ENCODE measurements at regions of chr1 and their contacts with region 1.

Region 1: GRCh38 chr1:72845342-72845741 is 563.0 kb upstream of the NEGR1 start:
- DNase-seq: no peak
- H3K4me3 ChIP-seq: no peak overlapping the region
- H3K27ac ChIP-seq: no peak overlapping the region
- H3K4me1 ChIP-seq: no peaks in the 10 kb centered on the region
- H3K27me3 ChIP-seq: no peaks in the 10 kb centered on the region
- CTCF ChIP-seq: no peak
- POLR2A ChIP-seq: no peak

Region 2: DNA sequence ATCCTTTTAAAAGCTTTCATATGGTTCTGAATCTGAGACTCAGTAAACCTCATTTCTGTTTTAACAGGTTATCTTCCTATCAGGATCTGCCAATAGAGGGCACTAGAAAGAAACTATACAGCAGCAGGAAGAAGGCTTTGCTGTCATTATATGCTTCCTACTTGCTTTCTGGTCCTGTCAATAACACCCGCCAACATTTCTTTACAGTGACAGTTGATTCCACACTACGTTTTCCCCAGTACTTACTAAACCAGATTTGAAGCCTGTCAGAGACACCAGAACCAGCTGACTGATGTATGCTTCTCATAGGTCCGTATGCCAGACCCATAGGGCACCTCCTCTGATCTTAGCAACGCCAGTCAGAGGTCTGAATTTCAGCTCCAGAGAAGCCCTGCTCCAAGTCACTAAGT is 222.0 kb before region 1 on chr1:
- intact Hi-C with region 1: loop called (anchors 10 kb)
- DNase-seq: peak; percentile 4
- H3K4me3 ChIP-seq: no peak overlapping the region
- H3K27ac ChIP-seq: no peak overlapping the region
- H3K4me1 ChIP-seq: no peaks in the 10 kb centered on the region
- H3K27me3 ChIP-seq: no peaks in the 10 kb centered on the region
- CTCF ChIP-seq: peak in 3 of 4 experiments; percentile 20 to 47 (median 46)
- POLR2A ChIP-seq: no peak

Region 3: DNA sequence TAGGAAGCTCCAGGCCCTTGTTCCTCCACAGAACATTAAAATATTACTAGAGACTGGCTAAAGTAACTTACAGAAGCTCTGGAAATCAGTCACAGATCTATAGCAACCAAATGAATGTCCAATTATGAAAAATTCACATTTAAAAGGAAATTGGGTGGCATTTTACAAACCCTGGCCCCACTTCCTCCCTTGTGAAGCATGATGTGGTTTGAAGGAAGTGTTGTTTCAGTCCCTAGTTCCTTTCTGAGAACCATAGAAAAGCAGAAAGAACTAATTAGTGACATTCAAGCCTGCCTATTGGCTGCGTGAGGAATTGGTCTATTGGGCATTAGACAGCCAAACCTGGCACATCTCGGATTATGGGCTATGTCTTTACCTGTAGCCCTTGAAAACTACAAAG is 86.7 kb after region 1 on chr1:
- intact Hi-C with region 1: no loop called
- DNase-seq: no peak
- H3K4me3 ChIP-seq: no peak overlapping the region
- H3K27ac ChIP-seq: no peak overlapping the region
- H3K4me1 ChIP-seq: no peaks in the 10 kb centered on the region
- H3K27me3 ChIP-seq: no peaks in the 10 kb centered on the region
- CTCF ChIP-seq: no peak
- POLR2A ChIP-seq: no peak

Region 4: DNA sequence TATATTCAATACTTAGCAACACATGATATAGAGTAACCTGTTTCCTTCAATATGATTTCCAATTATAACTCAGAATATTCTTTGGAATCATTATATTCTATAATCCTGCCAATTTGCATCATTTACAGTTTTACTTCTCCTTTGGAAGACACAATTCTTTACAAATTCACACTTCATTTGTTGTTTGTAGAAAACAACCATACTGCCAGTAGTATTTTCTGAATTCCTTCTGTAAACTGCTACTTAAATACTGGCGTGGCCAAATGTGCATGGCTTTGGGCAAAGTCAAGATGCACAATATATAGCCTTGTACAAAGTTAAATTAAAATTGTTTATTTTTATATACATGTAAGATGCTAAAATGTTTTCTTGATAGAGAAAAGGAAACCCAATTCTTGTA is 124.1 kb after region 1 on chr1:
- intact Hi-C with region 1: no loop called
- DNase-seq: no peak
- H3K4me3 ChIP-seq: no peak overlapping the region
- H3K27ac ChIP-seq: no peak overlapping the region
- H3K4me1 ChIP-seq: no peaks in the 10 kb centered on the region
- H3K27me3 ChIP-seq: no peaks in the 10 kb centered on the region
- CTCF ChIP-seq: no peak
- POLR2A ChIP-seq: no peak

Region 5: GRCh38 chr1:73009938-73010337 is 164.6 kb after region 1 on chr1:
- intact Hi-C with region 1: no loop called
- DNase-seq: no peak
- H3K4me3 ChIP-seq: no peak overlapping the region
- H3K27ac ChIP-seq: no peak overlapping the region
- H3K4me1 ChIP-seq: no peaks in the 10 kb centered on the region
- H3K27me3 ChIP-seq: no peaks in the 10 kb centered on the region
- CTCF ChIP-seq: no peak
- POLR2A ChIP-seq: no peak